ENCODE measurements at regions of chr1 and their contacts with region 1.

Region 1: GRCh38 chr1:16217061-16217785 is 4.8 kb upstream of the ARHGEF19 start:
- DNase-seq: peak; percentile 97
- ATAC-seq: peak; percentile 99
- H3K4me3 Mint-ChIP-seq: peak overlapping the region; percentile 78
- H3K27ac Mint-ChIP-seq: peak overlapping the region; percentile 76
- H3K4me1 Mint-ChIP-seq: peaks cover 31% of the 10 kb centered on the region
- H3K27me3 Mint-ChIP-seq: peaks cover 9% of the 10 kb centered on the region

Region 2: GRCh38 chr1:16206547-16207317 is 10.5 kb before region 1 on chr1:
- CTCF ChIA-PET with region 1: interaction called, 9 read pairs
- POLR2A ChIA-PET with region 1: interaction called, 30 read pairs
- DNase-seq: peak; percentile 97
- ATAC-seq: peak; percentile 94
- H3K4me3 Mint-ChIP-seq: peak overlapping the region; percentile 77
- H3K27ac Mint-ChIP-seq: peak overlapping the region; percentile 98
- H3K4me1 Mint-ChIP-seq: peaks cover 11% of the 10 kb centered on the region
- H3K27me3 Mint-ChIP-seq: peaks cover under 1% of the 10 kb centered on the region

Region 3: GRCh38 chr1:16236511-16237342 is 19.5 kb after region 1 on chr1 and contains the start of gene CPLANE2:
- CTCF ChIA-PET with region 1: no interaction called
- POLR2A ChIA-PET with region 1: interaction called, 16 read pairs
- DNase-seq: peak; percentile 98
- ATAC-seq: peak; percentile 89
- H3K4me3 Mint-ChIP-seq: peak within 1 kb of the TSS; percentile 84
- H3K27ac Mint-ChIP-seq: peak within 1 kb of the TSS; percentile 87
- H3K4me1 Mint-ChIP-seq: peaks cover 34% of the 10 kb centered on the region
- H3K27me3 Mint-ChIP-seq: no peaks in the 10 kb centered on the region
- total RNA-seq, gene CPLANE2: 5.1 to 6.1 TPM

Measured in activated CD8-positive, alpha-beta T cell treated with anti-CD3 and anti-CD28 coated beads, Interleukin-2, amount 10 ng/mL, durations not matched to agents 7 days and 5 days (primary cell).